Right ventricle myocardium inferior (tissue), 1 donor: ENCODE measurements at regions of chr5 and their contacts with region 1.

Region 1: GRCh38 chr5:56532466-56532865 is 282.9 kb upstream of the MAP3K1 start:
- DNase-seq: no peak
- ATAC-seq: no peak

Region 2: DNA sequence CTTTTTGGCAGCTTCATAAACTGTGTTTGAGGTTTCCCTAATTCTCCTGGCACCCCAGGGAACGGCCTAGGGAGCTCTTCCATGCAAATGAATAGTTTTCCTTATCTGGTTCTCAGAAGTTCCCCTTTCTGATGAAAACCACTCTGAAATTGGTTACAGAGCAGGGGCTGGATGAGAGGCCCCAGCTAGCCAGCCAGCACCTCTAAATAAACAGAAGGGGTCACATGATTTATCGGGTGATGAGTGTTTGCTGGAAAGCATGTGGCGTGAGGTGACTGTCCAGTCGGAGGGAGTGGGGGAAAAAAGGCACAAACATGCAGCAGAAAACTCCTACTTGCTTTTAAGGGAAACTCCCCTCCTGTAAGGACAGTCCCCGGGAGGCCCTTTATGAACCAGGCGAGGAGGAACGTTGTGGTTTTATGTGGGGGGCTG is 38.1 kb before region 1 on chr5:
- intact Hi-C with region 1: loop called (anchors 2 kb)
- DNase-seq: no peak
- ATAC-seq: peak; percentile 76

Region 3: GRCh38 chr5:56827049-56827448 is 294.6 kb after region 1 on chr5:
- intact Hi-C with region 1: no loop called
- DNase-seq: no peak
- ATAC-seq: no peak